ENCODE measurements at regions of chr9 and their contacts with region 1.

Region 1: DNA sequence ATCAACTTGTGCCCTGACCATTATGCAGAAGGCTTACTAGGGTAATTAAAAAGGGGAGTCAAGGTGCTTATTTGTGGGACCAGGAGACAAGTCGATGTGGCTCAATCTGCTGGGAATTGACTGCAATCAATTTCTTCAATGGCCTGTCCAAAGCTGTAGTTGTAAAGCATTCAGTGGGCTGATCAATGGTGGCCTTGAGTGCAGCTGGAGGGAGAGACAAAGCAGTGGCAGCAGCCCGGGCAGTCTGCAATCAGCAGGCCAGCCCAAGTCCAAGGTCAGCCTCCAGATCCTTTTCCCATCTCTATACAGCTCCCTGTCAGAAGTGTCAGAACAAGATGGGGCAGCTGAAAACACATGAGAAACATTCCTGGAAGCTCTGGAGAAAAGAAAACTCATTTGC is 51.0 kb upstream of the BRINP1 start:
- DNase-seq: no peak
- H3K4me3 ChIP-seq: no peak overlapping the region
- H3K27ac ChIP-seq: no peak overlapping the region
- H3K4me1 ChIP-seq: no peaks in the 10 kb centered on the region
- H3K27me3 ChIP-seq: no peaks in the 10 kb centered on the region
- CTCF ChIP-seq: no peak
- POLR2A ChIP-seq: no peak

Region 2: GRCh38 chr9:118384531-118385100 is 1035.6 kb before region 1 on chr9:
- CTCF ChIA-PET with region 1: no interaction called
- POLR2A ChIA-PET with region 1: no interaction called
- dilution Hi-C with region 1: no loop called
- intact Hi-C with region 1: no loop called
- DNase-seq: no peak
- H3K4me3 ChIP-seq: no peak overlapping the region
- H3K27ac ChIP-seq: no peak overlapping the region
- H3K4me1 ChIP-seq: no peaks in the 10 kb centered on the region
- H3K27me3 ChIP-seq: no peaks in the 10 kb centered on the region
- CTCF ChIP-seq: no peak
- POLR2A ChIP-seq: no peak

Region 3: GRCh38 chr9:119357336-119358096 is 62.7 kb before region 1 on chr9:
- CTCF ChIA-PET with region 1: no interaction called
- POLR2A ChIA-PET with region 1: no interaction called
- dilution Hi-C with region 1: no loop called
- intact Hi-C with region 1: no loop called
- DNase-seq: no peak
- H3K4me3 ChIP-seq: no peak overlapping the region
- H3K27ac ChIP-seq: no peak overlapping the region
- H3K4me1 ChIP-seq: no peaks in the 10 kb centered on the region
- H3K27me3 ChIP-seq: no peaks in the 10 kb centered on the region
- CTCF ChIP-seq: no peak
- POLR2A ChIP-seq: no peak

Region 4: GRCh38 chr9:119500072-119500771 is 80.0 kb after region 1 on chr9:
- CTCF ChIA-PET with region 1: no interaction called
- POLR2A ChIA-PET with region 1: no interaction called
- dilution Hi-C with region 1: no loop called
- intact Hi-C with region 1: loop called (anchors 2 kb)
- DNase-seq: no peak
- H3K4me3 ChIP-seq: no peak overlapping the region
- H3K27ac ChIP-seq: no peak overlapping the region
- H3K4me1 ChIP-seq: no peaks in the 10 kb centered on the region
- H3K27me3 ChIP-seq: no peaks in the 10 kb centered on the region
- CTCF ChIP-seq: no peak
- POLR2A ChIP-seq: no peak

Measured in endothelial cell of umbilical vein (primary cell).